Endothelial cell of umbilical vein (primary cell): ENCODE measurements at regions of chr11 and their contacts with region 1.

Region 1: DNA sequence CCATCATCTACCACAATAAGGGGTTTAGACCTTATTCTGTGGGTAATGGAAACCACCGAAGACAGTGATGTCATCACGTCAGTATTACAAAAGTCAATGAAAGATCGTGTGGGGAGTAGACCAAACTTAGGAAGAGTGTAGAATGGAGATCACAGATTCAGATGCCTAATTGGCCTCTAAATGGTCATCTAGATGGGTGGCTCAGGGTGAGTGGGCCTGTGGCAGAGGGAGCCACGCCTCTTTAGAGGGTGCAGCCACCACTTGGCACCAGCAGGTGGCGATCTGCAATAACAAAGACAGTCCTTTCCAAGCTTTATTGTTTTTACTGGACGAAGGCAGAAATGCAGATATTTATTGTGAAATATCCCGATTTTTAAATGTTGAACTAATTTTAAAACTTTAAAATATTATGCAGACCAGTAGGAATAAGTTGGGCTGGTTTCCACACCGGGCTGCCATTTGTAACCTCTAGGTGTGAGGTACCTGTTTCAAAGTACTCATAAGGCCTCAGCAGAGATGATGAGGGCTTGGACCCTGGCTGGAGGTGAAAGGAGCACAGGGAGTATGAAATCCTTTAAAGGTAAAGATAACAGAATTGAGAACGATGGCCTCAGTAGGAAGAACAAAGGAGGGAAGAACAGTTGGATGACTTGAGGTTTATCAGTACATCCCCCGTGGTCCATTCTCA is 222.0 kb downstream of the DBX1 start:
- DNase-seq: peak; percentile 71
- H3K4me3 ChIP-seq: no peak overlapping the region
- H3K27ac ChIP-seq: no peak overlapping the region
- H3K4me1 ChIP-seq: peaks cover 9% of the 10 kb centered on the region
- H3K27me3 ChIP-seq: no peaks in the 10 kb centered on the region
- CTCF ChIP-seq: peak; percentile 79 to 88
- POLR2A ChIP-seq: no peak

Region 2: DNA sequence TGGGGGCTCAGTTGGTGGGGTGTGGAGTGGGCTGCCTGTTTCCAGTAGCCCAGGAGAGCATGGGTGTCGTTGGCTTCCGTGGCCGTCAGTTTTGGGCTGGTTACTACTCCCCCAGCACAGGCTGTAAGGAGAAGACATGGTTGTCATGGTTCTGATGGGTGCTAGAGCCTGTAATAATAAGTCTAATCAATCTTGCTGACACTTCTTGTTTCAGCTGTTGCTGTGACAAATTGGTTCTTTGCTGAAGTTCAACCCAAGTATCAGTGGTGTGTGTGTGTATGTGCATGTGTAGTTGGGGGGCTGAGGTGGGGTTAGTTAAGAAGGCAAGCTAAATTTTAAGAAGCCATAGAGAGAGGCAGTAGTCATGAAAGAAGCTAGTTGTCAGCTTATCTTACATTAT is 283.3 kb after region 1 on chr11:
- CTCF ChIA-PET with region 1: no interaction called
- POLR2A ChIA-PET with region 1: no interaction called
- dilution Hi-C with region 1: no loop called
- intact Hi-C with region 1: no loop called
- DNase-seq: no peak
- H3K4me3 ChIP-seq: no peak overlapping the region
- H3K27ac ChIP-seq: no peak overlapping the region
- H3K4me1 ChIP-seq: no peaks in the 10 kb centered on the region
- H3K27me3 ChIP-seq: peaks cover 2 to 3% of the 10 kb centered on the region in 2 experiments
- CTCF ChIP-seq: no peak
- POLR2A ChIP-seq: no peak

Region 3: DNA sequence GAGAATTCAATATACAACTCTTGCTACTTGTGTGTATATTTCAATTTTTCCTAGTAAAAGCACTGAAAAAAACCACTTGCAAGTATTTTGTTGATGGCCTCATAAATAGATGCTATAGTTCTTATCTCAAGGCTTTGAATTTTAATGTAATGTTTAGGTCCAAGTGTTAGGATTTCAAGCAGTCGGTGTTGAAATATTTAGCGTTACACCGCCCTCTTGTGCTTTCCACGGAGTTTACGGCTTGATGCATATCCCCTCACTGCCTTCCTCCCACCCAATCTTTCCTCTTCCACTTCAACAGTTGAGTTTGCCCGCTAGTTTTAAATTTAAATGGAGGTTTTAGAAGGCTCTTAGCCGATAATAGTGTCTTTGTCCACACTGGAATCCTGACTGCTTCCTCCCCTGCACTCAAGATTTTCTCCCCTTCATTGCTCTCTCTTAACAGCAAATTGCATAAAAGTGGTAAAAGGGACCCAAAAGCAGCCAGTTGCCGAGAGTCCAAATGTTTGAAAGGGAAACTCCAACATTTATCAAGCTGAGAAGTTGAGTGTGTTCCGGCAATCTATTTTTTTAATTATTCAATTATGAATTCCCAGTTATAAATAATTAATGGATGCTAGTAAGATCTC is 399.3 kb after region 1 on chr11:
- CTCF ChIA-PET with region 1: no interaction called
- POLR2A ChIA-PET with region 1: no interaction called
- dilution Hi-C with region 1: no loop called
- intact Hi-C with region 1: loop called (anchors 5 kb)
- DNase-seq: peak; percentile 43
- H3K4me3 ChIP-seq: no peak overlapping the region
- H3K27ac ChIP-seq: no peak overlapping the region
- H3K4me1 ChIP-seq: no peaks in the 10 kb centered on the region
- H3K27me3 ChIP-seq: peaks cover 28 to 63% of the 10 kb centered on the region in 2 experiments
- CTCF ChIP-seq: peak; percentile 13 to 47
- POLR2A ChIP-seq: no peak